ENCODE measurements at regions of chr6 and their contacts with region 1.

Region 1: DNA sequence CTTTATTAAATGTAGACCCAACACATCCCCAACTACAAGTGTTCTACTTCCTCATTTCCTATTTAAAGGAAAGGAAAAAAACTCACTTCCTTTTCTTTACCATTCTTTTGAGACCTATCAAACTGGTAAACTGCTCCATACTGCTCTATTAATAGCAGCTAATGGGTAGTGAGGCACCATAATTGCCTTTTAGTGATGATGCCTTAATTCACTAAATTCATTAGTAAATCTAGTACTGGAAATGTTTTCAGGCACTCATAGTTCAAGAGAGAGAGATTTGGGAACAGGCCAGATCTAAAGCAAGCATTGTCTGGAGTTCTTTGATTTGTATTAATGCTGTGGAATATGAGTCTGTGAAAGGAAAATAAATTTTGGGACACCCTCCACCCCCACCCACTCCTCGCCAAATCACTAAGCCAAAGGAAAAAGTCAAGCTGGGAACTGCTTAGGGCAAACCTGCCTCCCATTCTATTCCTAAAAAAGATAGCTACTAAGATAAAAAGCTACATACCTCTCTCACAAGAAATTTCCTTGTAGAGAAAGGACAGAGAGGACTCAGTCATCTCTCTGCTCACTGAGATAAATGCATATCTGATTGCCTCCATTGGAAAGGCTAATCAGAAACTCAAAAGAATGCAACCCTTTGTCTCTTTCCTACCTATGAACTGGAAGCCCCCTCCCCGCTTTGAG is 13.6 kb upstream of the IBTK start:
- DNase-seq: peak; percentile 52
- H3K4me3 ChIP-seq: no peak overlapping the region
- H3K27ac ChIP-seq: peak overlapping the region; percentile 6
- H3K4me1 ChIP-seq: peaks cover 27% of the 10 kb centered on the region
- H3K27me3 ChIP-seq: no peaks in the 10 kb centered on the region
- CTCF ChIP-seq: no peak

Region 2: GRCh38 chr6:83378621-83379388 is 1117.7 kb after region 1 on chr6:
- CTCF ChIA-PET with region 1: no interaction called
- POLR2A ChIA-PET with region 1: no interaction called
- intact Hi-C with region 1: loop called (anchors 10 kb)
- DNase-seq: no peak
- H3K4me3 ChIP-seq: no peak overlapping the region
- H3K27ac ChIP-seq: peak overlapping the region; percentile 89
- H3K4me1 ChIP-seq: peaks cover 68% of the 10 kb centered on the region
- H3K27me3 ChIP-seq: no peaks in the 10 kb centered on the region
- CTCF ChIP-seq: no peak